ENCODE measurements at regions of chr19 and their contacts with region 1.

Region 1: GRCh38 chr19:39052243-39052746 is 19.9 kb upstream of the FBXO27 start:
- DNase-seq: peak; percentile 88
- H3K4me3 Mint-ChIP-seq: no peak overlapping the region
- H3K27ac Mint-ChIP-seq: no peak overlapping the region
- H3K4me1 Mint-ChIP-seq: peaks cover 20% of the 10 kb centered on the region
- H3K27me3 Mint-ChIP-seq: no peaks in the 10 kb centered on the region
- CTCF ChIP-seq: peak; percentile 97

Region 2: DNA sequence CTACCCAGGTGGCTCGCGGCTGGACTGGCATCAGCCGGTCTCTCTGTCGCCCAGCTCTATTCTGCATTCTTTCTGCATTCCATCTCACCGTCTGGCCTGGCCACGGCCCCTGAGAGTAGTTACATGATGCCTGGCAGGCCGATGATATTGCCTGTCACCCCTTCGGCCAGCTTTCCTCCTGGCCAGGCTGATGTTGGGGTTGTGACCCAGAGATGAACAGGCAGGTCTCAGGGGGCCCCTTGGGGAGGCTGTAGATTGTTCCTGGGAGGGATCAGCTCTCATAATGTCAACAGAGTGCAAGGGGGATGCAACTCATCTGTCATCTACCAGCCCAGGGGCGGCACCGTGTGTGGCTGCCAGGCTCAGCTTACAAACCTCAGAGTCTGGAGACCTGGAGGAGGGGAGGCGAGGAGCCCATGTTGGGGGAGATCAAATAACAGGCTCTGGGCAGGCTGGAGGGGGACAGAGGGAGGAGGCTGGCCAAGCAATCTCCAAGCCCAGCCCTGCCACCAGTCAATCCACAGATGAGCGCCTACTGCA is 63.2 kb before region 1 on chr19:
- CTCF ChIA-PET with region 1: no interaction called
- intact Hi-C with region 1: no loop called
- DNase-seq: peak; percentile 61
- H3K4me3 Mint-ChIP-seq: no peak overlapping the region
- H3K27ac Mint-ChIP-seq: no peak overlapping the region
- H3K4me1 Mint-ChIP-seq: peaks cover 24% of the 10 kb centered on the region
- H3K27me3 Mint-ChIP-seq: peaks cover 13% of the 10 kb centered on the region
- CTCF ChIP-seq: no peak

Region 3: DNA sequence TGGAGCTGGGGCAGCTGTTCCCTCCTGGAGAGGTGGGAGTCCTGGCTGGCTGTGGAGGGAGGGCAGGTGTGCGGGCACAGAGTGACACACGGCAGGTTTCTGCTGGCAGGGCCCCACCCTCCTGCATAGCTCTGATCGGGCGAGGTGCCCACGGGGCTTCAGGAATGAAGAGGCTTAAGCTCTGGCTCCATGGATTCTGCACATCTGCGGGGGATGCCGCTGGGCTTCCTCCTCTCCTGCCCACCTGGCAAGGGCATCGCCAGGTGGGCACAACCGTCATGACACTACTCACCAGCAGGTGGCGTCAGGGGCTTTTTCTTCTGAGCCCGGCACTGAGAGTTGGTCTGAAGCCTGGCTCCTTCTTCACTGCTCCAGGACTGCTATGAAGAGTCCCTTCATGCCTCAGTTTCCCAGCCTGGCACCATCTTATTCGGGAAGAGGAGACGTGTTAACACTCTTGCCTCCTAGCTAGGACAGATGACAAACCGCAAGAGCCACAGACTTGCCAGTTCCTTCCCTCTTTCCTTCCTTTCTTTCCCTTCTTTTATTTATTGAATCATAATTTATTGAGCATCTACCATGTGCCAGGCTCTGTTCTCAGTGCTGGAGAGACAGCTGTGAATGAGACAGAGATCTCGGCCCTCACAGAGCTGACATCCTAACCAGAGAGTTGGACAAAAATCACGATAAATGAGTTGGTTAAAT is 58.1 kb after region 1 on chr19:
- CTCF ChIA-PET with region 1: interaction called, 4 read pairs
- intact Hi-C with region 1: loop called (anchors 5 kb)
- DNase-seq: peak; percentile 91
- H3K4me3 Mint-ChIP-seq: no peak overlapping the region
- H3K27ac Mint-ChIP-seq: peak overlapping the region; percentile 46
- H3K4me1 Mint-ChIP-seq: peaks cover 33% of the 10 kb centered on the region
- H3K27me3 Mint-ChIP-seq: no peaks in the 10 kb centered on the region
- CTCF ChIP-seq: peak; percentile 95

Region 4: DNA sequence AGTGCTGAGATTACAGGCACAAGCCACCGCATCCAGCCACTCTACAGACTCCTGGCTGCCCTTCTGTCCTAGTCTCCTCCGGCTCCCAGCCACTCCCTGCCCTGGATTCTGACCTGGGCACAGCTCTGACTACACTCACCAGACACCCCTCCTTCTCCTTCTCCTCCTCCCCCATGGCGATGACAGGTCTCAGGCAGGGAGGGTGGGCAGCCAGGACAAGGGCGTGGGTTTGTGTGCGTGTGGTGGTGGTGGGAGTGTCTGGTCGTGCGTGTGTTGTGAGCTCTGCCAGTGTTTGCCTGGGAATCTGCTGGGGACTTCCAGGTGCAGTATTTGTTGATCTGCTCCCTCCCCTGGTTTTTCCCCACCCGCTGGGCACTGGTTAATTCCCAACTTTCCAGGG is 141.5 kb after region 1 on chr19:
- CTCF ChIA-PET with region 1: no interaction called
- intact Hi-C with region 1: loop called (anchors 5 kb)
- DNase-seq: no peak
- H3K4me3 Mint-ChIP-seq: peak overlapping the region; percentile 8
- H3K27ac Mint-ChIP-seq: peak overlapping the region; percentile 55
- H3K4me1 Mint-ChIP-seq: peaks cover 38% of the 10 kb centered on the region
- H3K27me3 Mint-ChIP-seq: peaks cover 18% of the 10 kb centered on the region
- CTCF ChIP-seq: no peak

Measured in Calu3 (cell line).